ENCODE measurements at regions of chr2 and their contacts with region 1.

Region 1: GRCh38 chr2:181774685-181775084 is 94.4 kb upstream of the NEUROD1 start:
- DNase-seq: no peak

Region 2: DNA sequence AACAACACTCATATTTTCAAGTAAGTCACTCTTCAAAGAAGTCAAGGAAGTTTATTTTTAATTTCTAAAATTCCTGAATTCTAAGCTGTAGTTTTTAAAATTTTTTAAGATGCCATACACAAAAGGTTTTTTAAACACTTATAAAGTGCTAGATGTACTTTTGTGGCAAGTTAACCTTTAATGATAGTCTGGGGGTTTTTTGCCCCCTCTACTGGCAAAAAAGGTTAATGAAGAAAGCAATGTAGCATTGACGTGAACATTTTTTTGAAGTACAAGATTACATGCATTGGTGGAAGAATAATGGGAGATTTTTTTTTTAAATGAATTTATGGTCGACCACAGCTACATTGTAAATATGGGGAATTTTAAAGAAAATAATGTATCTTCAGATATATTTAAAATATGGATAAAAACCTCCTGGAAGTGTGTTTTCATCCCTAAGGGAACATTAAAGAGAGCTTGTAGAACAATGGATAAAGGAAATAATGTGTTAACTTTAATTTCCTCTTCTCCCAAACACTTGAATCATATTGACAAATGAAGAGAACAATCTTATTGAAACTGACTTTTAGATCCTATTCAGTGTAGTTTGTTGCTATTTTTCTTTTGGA is 129.4 kb after region 1 on chr2:
- in situ Hi-C with region 1: loop called (anchors 25 kb)
- DNase-seq: peak; percentile 65

Region 3: GRCh38 chr2:182077451-182078142 is 302.9 kb after region 1 on chr2:
- in situ Hi-C with region 1: loop called (anchors 25 kb)
- DNase-seq: peak; percentile 83